ENCODE measurements at regions of chr13 and their contacts with region 1.

Region 1: GRCh38 chr13:39602614-39603366 is at the start of gene LHFPL6:
- DNase-seq: peak; percentile 85
- ATAC-seq: peak; percentile 99
- H3K4me3 Mint-ChIP-seq: peak within 1 kb of the TSS; percentile 72
- H3K27ac Mint-ChIP-seq: no peak within 1 kb of the TSS
- H3K4me1 Mint-ChIP-seq: peaks cover 6% of the 10 kb centered on the region
- H3K27me3 Mint-ChIP-seq: peaks cover 37% of the 10 kb centered on the region
- total RNA-seq, gene LHFPL6: 1.2 TPM

Region 2: GRCh38 chr13:39273953-39274738 is 328.6 kb before region 1 on chr13:
- CTCF ChIA-PET with region 1: no interaction called
- POLR2A ChIA-PET with region 1: no interaction called
- intact Hi-C with region 1: loop called in 1 of 2 experiments (anchors 2 kb)
- DNase-seq: peak; percentile 7
- ATAC-seq: no peak
- H3K4me3 Mint-ChIP-seq: no peak overlapping the region
- H3K27ac Mint-ChIP-seq: no peak overlapping the region
- H3K4me1 Mint-ChIP-seq: no peaks in the 10 kb centered on the region
- H3K27me3 Mint-ChIP-seq: peaks cover 11% of the 10 kb centered on the region

Region 3: DNA sequence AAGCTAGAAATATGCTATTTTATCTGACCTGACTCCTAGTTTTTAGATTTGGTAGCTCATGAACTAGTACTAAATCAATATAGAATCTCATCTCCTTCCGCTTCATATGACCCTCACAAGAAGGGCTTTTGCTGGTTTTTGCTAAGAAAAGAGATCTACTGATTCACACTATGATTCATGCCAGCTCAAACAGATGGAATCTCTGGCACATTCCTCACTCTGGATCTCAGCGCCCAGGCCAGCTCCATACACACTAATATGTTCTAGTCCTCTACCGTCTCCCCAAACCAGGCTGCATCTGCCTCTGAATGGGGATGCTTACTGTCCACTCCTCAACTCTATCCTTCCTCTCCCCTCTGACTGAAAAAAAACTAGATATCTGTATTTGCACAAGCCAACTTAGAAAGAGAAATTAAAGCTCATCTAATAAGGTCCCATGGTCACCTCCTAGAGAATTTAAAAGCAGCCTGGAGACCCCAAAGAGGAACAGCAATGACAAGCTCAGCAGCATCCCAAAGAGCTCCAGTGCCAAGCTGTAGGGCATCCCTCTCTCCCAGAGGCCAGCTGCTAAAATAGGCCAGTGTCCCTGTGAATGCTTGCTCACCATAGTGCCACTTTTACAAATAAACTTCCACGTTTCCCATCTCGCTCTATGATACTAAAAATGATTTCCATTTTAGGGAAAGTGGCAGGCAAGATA is 74.7 kb before region 1 on chr13:
- CTCF ChIA-PET with region 1: no interaction called
- POLR2A ChIA-PET with region 1: no interaction called
- intact Hi-C with region 1: no loop called
- DNase-seq: no peak
- ATAC-seq: no peak
- H3K4me3 Mint-ChIP-seq: no peak overlapping the region
- H3K27ac Mint-ChIP-seq: no peak overlapping the region
- H3K4me1 Mint-ChIP-seq: no peaks in the 10 kb centered on the region
- H3K27me3 Mint-ChIP-seq: peaks cover 21% of the 10 kb centered on the region

Region 4: DNA sequence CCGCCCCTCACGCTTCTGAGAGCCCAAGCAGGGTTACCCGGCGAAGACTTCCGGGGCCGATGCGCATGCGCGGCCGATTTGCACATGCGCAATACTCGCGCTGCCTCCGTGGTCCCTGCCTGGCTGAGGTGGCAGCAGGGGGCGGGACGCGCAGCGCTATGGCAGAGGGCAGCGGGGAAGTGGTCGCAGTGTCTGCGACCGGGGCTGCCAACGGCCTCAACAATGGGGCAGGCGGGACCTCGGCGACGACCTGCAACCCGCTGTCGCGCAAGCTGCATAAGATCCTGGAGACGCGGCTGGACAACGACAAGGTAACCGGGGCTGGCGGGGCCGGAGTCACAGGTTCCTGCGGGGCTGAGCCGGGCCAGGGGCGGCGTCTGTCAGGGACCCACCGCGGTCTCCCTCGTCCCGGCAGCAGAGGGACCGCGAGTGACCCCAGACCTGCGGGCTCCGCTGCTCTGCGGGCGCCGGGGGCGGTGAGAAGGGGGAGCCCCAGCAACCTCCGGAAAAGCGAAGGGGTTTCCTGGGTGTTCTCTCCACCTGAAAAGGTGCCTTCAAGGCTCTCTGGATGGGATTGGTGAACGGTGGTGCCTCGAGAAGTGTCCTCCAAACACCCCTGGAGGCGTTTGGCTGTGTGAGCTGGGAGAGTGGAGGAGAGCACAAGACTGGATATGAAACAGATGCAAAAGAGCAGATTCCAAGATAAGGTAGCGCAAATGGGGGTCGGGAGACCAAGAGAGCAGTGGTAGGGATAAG is 53.0 kb after region 1 on chr13 and contains the start of gene COG6:
- CTCF ChIA-PET with region 1: no interaction called
- POLR2A ChIA-PET with region 1: no interaction called
- intact Hi-C with region 1: loop called in 1 of 2 experiments (anchors 2 kb)
- DNase-seq: peak; percentile 94
- ATAC-seq: peak; percentile 94
- H3K4me3 Mint-ChIP-seq: peak within 1 kb of the TSS; percentile 98
- H3K27ac Mint-ChIP-seq: peak within 1 kb of the TSS; percentile 93
- H3K4me1 Mint-ChIP-seq: peaks cover 21% of the 10 kb centered on the region
- H3K27me3 Mint-ChIP-seq: no peaks in the 10 kb centered on the region
- total RNA-seq, gene COG6: 27.7 to 28.9 TPM